PC-3 (cell line): ENCODE measurements at regions of chr1 and their contacts with region 1.

Region 1: DNA sequence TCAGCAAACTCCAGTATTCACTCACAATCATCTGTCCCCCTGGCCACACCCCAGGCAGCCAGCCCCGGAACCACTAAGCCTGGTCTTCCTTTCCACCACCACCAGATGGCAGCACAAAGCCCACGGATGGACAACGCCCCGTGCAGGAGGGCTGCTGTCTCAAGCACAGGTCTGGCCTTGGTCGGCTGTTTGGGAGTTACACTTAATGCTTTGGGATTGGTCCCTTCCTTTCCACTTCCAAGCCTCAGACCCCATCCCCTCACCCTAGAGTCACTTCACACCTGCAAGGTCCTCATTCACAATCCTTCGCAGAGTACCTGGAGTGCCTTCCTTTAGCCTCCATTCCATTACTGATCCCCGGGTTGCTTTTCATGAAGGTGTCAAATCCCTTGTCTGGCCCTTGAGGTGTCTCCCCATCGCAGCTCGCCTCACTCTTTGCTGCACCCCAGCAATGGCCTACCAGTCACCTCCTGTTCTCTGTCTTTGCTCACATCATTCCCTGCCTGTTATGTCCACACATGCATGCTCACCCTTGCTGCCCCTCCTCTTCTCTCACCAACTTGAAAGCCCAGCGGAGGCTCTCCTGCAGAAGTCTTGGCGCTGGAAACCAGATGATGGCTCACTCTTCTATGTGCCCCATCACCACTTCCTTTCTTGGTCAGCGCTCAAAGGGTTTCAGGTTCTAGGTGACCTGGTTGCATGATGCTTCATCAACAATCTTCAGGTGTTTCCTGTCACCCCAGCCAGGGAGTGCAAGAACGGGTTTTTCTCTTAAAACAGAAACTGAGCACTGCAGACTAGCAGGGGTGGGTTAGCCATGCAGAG is 24.9 kb upstream of the KCNA2 start:
- DNase-seq: peak; percentile 80
- ATAC-seq: peak; percentile 99
- H3K4me3 ChIP-seq: no peak overlapping the region
- H3K27ac ChIP-seq: no peak overlapping the region
- H3K4me1 ChIP-seq: no peaks in the 10 kb centered on the region
- H3K27me3 ChIP-seq: peaks cover 5% of the 10 kb centered on the region; the same call in 1 of the 2 replicates
- CTCF ChIP-seq: peak; percentile 85

Region 2: GRCh38 chr1:110766025-110766647 is 135.1 kb after region 1 on chr1:
- CTCF ChIA-PET with region 1: no interaction called
- POLR2A ChIA-PET with region 1: no interaction called
- intact Hi-C with region 1: loop called (anchors 1 kb)
- DNase-seq: peak; percentile 56
- ATAC-seq: peak; percentile 45; the same call in 1 of the 2 replicates
- H3K4me3 ChIP-seq: no peak overlapping the region
- H3K27ac ChIP-seq: no peak overlapping the region
- H3K4me1 ChIP-seq: peaks cover 9% of the 10 kb centered on the region; the same call in 1 of the 2 replicates
- H3K27me3 ChIP-seq: peaks cover 23% of the 10 kb centered on the region
- CTCF ChIP-seq: peak; percentile 87

Region 3: DNA sequence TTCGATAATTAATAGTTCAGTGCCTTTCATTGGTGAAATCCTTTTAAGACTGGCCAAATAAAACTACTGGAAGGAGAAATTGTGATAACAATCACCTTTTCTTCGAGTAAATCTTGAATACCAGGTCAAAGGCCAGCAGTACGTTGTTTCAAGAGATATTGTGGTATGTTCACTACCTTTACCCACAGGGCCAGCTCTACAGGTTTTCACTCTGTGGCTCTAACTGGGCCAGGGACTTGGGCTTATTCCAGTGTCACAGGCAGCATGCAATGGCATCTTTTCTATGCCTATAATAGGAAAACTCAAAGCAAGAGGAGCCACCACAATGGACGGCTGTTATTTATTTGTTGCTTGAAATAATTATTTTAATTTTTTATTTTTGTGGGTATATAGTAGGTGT is 359.5 kb after region 1 on chr1:
- CTCF ChIA-PET with region 1: no interaction called
- POLR2A ChIA-PET with region 1: no interaction called
- intact Hi-C with region 1: loop called (anchors 5 kb)
- DNase-seq: no peak
- ATAC-seq: no peak
- H3K4me3 ChIP-seq: no peak overlapping the region
- H3K27ac ChIP-seq: no peak overlapping the region
- H3K4me1 ChIP-seq: no peaks in the 10 kb centered on the region
- H3K27me3 ChIP-seq: peaks cover 34% of the 10 kb centered on the region
- CTCF ChIP-seq: no peak

Region 4: GRCh38 chr1:111006541-111006940 is 375.5 kb after region 1 on chr1:
- CTCF ChIA-PET with region 1: no interaction called
- POLR2A ChIA-PET with region 1: no interaction called
- intact Hi-C with region 1: no loop called
- DNase-seq: no peak
- ATAC-seq: no peak
- H3K4me3 ChIP-seq: no peak overlapping the region
- H3K27ac ChIP-seq: no peak overlapping the region
- H3K4me1 ChIP-seq: no peaks in the 10 kb centered on the region
- H3K27me3 ChIP-seq: no peaks in the 10 kb centered on the region
- CTCF ChIP-seq: no peak